ENCODE measurements at regions of chr19 and their contacts with region 1.

Region 1: GRCh38 chr19:15466851-15467733 is 2.7 kb upstream of the RASAL3 start:
- DNase-seq: peak; percentile 55
- H3K4me3 ChIP-seq: peak overlapping the region; percentile 5
- H3K27ac ChIP-seq: peak overlapping the region; percentile 56
- H3K4me1 ChIP-seq: peaks cover 33% of the 10 kb centered on the region
- CTCF ChIP-seq: no peak

Region 2: DNA sequence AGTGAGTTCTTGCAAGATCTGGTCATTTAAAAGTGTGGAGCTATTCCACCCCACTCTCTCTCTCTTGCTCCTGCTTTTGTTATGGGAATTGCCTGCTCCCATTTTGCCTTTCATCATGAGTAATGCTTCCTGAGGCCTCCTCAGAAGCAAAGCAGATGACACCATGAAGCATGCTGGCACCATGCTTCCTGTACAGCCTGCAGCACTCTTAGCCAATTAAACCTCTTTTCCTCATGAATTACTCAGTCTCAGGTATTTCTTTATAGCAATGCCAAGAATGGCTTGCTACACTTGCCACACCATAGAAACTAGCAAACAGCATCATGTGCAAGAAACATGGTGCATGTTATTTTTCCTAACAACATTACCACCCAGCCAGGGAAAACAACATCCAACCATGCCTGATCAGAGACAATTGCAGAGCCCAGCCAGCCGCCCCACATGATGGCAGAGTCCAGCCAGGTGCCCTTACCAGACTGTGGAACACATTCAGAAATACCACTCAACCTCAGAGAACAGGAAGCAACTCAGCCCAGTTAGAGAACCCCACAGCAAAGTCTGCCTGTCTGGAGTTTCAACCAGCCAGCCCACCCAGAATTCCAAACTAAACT is 323.0 kb before region 1 on chr19:
- CTCF ChIA-PET with region 1: no interaction called
- POLR2A ChIA-PET with region 1: no interaction called
- intact Hi-C with region 1: no loop called
- DNase-seq: no peak
- H3K4me3 ChIP-seq: no peak overlapping the region
- H3K27ac ChIP-seq: no peak overlapping the region
- H3K4me1 ChIP-seq: no peaks in the 10 kb centered on the region
- CTCF ChIP-seq: no peak

Region 3: GRCh38 chr19:15418588-15419412 is 48.3 kb before region 1 on chr19 and contains the start of gene AKAP8L:
- CTCF ChIA-PET with region 1: no interaction called
- POLR2A ChIA-PET with region 1: interaction called, 7 read pairs
- intact Hi-C with region 1: loop called (anchors 1 kb)
- DNase-seq: peak; percentile 100
- H3K4me3 ChIP-seq: peak within 1 kb of the TSS; percentile 84
- H3K27ac ChIP-seq: peak within 1 kb of the TSS; percentile 69
- H3K4me1 ChIP-seq: peaks cover 22% of the 10 kb centered on the region
- CTCF ChIP-seq: peak; percentile 82
- total RNA-seq, gene AKAP8L: 119 and 122 TPM in 2 replicates